ENCODE measurements at regions of chr14 and their contacts with region 1.

Region 1: DNA sequence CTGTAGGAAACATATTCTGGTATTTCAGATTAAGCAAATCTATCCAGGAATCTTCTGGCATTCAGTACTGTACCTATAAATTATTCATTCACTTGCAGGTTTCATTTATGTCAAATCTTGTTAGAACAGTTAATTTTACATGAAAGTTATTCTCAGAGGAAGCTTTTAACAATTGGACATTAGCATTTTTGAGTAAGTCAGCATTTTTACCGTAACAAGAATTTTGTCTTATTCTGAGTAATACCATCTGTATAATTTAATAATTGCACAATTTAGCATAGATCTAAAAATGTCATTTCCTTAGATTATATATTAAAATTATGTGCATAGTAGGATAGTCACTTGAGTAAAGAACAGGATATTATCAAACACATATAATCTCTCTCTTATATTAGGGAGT is 764.8 kb upstream of the LRFN5 start:
- DNase-seq: no peak
- H3K4me3 ChIP-seq: no peak overlapping the region
- H3K4me3 Mint-ChIP-seq: no peak overlapping the region
- H3K27ac Mint-ChIP-seq: no peak overlapping the region
- H3K4me1 ChIP-seq: peaks cover 24% of the 10 kb centered on the region
- H3K4me1 Mint-ChIP-seq: peaks cover 22% of the 10 kb centered on the region
- H3K27me3 ChIP-seq: no peaks in the 10 kb centered on the region
- H3K27me3 Mint-ChIP-seq: no peaks in the 10 kb centered on the region
- CTCF ChIP-seq: no peak

Region 2: GRCh38 chr14:40697231-40697630 is 144.7 kb before region 1 on chr14:
- CTCF ChIA-PET with region 1: no interaction called
- POLR2A ChIA-PET with region 1: no interaction called
- intact Hi-C with region 1: no loop called
- DNase-seq: no peak
- H3K4me3 ChIP-seq: no peak overlapping the region
- H3K4me3 Mint-ChIP-seq: no peak overlapping the region
- H3K27ac Mint-ChIP-seq: no peak overlapping the region
- H3K4me1 ChIP-seq: no peaks in the 10 kb centered on the region
- H3K4me1 Mint-ChIP-seq: no peaks in the 10 kb centered on the region
- H3K27me3 ChIP-seq: no peaks in the 10 kb centered on the region
- H3K27me3 Mint-ChIP-seq: no peaks in the 10 kb centered on the region
- CTCF ChIP-seq: no peak

Region 3: DNA sequence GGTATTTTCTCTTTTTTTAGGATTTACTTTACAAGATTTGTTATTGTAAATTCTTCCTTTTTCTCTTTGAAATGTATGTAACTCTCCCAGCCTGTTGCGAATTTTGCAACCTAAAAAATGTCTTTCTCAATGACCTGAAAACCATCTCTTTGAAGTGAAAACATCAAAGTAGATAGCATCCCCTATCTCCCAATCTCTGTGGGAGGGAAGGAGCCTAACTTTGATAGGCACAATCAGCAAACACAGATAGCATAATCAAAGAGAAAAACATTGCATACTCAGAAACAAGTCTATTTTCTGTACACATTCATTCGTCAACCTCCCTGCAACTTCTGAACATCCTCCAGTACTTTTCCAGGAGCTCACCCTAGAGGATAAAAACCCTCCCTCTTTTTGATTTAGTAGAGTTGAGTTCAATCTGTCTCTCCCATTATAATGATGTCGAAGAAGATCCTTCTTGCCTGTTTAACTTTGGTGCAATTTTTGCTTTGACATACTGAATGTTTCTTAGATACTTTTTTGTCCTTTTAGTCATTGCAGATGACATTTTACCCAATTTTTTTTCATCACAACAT is 84.4 kb before region 1 on chr14:
- CTCF ChIA-PET with region 1: no interaction called
- POLR2A ChIA-PET with region 1: no interaction called
- intact Hi-C with region 1: loop called (anchors 1 kb)
- DNase-seq: peak; percentile 38 to 65
- H3K4me3 ChIP-seq: no peak overlapping the region
- H3K4me3 Mint-ChIP-seq: peak overlapping the region; percentile 38
- H3K27ac Mint-ChIP-seq: peak overlapping the region; percentile 92
- H3K4me1 ChIP-seq: peaks cover 40% of the 10 kb centered on the region
- H3K4me1 Mint-ChIP-seq: peaks cover 30% of the 10 kb centered on the region
- H3K27me3 ChIP-seq: no peaks in the 10 kb centered on the region
- H3K27me3 Mint-ChIP-seq: no peaks in the 10 kb centered on the region
- CTCF ChIP-seq: no peak

Region 4: GRCh38 chr14:40903709-40904108 is 61.8 kb after region 1 on chr14:
- CTCF ChIA-PET with region 1: no interaction called
- POLR2A ChIA-PET with region 1: no interaction called
- intact Hi-C with region 1: loop called (anchors 2 kb)
- DNase-seq: no peak
- H3K4me3 ChIP-seq: no peak overlapping the region
- H3K4me3 Mint-ChIP-seq: no peak overlapping the region
- H3K27ac Mint-ChIP-seq: no peak overlapping the region
- H3K4me1 ChIP-seq: peaks cover 21% of the 10 kb centered on the region
- H3K4me1 Mint-ChIP-seq: no peaks in the 10 kb centered on the region
- H3K27me3 ChIP-seq: no peaks in the 10 kb centered on the region
- H3K27me3 Mint-ChIP-seq: no peaks in the 10 kb centered on the region
- CTCF ChIP-seq: no peak

Measured in Caco-2 (cell line).